ENCODE measurements at regions of chr17 and their contacts with region 1.

Region 1: GRCh38 chr17:49031965-49032928 is 35.1 kb downstream of the IGF2BP1 start:
- DNase-seq: peak; percentile 87 to 96
- ATAC-seq: peak; percentile 80 to 83
- H3K4me3 ChIP-seq: no peak overlapping the region
- H3K27ac ChIP-seq: peak overlapping the region; percentile 22 to 63; a peak in 5 of 6 replicates
- H3K4me1 ChIP-seq: peaks cover 15% of the 10 kb centered on the region
- CTCF ChIP-seq: peak; percentile 98
- EP300 ChIP-seq: no peak
- POLR2A ChIP-seq: no peak
- RAD21 ChIP-seq: peak; percentile 98 to 99

Region 2: DNA sequence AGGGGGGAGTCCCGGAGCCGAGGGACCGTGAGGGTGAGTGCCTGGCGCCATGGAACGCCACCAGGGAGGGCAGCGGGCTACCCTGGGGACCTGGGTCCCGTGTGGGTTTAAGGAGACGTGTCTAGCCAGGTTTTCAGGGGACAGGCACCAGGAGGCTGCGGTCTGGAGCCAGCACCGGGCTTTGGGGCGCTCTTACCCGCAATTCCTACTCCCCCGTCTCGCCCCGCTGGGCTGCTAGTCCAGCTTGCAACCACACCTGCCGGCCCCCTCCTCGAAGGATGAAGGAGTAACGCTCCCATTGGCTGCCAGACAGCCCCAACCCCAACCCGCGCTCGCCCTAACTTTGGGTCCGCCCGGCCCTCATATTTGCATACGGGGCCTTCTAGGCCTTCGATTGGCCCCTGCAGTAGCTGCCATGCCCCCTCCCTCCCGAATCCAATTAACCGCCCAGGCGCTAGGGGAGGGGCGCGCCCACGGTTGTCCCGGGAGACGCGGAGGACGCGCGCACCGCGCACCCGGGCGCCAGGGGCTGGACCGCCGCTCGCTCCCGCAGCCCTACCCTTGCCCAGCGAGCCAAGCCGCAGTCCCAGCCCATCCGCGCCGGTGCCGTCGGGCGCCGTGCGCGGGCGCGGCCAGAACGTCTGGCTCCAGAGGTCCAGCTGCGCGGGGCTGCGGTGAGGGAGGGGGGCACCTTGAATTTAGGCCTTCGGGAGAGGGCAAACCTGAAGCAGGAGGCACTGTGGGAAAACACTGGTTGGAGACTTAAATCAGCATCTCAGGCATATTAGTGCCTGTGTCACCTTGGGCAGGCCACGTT is 215.3 kb before region 1 on chr17 and contains the start of gene TTLL6:
- CTCF ChIA-PET with region 1: interaction called, 13 read pairs
- POLR2A ChIA-PET with region 1: no interaction called
- DNase-seq: peak; percentile 90 to 97
- ATAC-seq: peak; percentile 95 to 97
- H3K4me3 ChIP-seq: peak within 1 kb of the TSS; percentile 54
- H3K27ac ChIP-seq: peak within 1 kb of the TSS; percentile 56 to 76
- H3K4me1 ChIP-seq: peaks cover 23% of the 10 kb centered on the region; the same call in 2 of the 3 replicates
- CTCF ChIP-seq: no peak
- EP300 ChIP-seq: no peak
- POLR2A ChIP-seq: no peak; the same call in 1 of the 2 replicates
- RAD21 ChIP-seq: no peak
- polyA plus RNA-seq, gene TTLL6: 7.8 and 8.9 TPM in 2 replicates

Region 3: DNA sequence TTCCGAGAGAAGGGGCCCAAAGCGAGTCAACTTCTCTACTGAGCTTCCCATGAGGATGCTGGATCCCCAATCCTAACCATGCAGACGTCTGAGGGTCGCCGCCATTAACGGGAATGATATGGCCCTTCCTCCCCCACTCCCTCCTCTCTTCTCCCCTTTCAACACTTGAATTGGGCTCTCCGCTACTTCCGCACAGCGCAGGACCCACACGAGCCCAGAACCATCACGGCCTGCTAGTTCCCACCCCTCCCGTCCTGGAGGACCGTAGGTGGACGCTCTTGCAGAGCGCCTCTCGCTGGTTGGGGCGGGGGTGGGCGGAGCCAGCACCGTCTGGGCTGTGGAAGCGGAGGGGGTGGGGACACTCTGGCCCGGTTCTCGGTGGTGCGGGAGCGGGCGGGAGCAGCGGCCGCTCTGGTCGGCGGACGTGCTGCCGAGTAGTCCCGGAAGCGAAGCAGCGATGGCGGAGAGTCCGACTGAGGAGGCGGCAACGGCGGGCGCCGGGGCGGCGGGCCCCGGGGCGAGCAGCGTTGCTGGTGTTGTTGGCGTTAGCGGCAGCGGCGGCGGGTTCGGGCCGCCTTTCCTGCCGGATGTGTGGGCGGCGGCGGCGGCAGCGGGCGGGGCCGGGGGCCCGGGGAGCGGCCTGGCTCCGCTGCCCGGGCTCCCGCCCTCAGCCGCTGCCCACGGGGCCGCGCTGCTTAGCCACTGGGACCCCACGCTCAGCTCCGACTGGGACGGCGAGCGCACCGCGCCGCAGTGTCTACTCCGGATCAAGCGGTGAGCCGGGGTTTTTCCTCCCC is 124.0 kb before region 1 on chr17 and contains the start of gene UBE2Z:
- CTCF ChIA-PET with region 1: interaction called, 32 read pairs
- POLR2A ChIA-PET with region 1: interaction called, 6 read pairs
- DNase-seq: peak; percentile 99
- ATAC-seq: peak; percentile 92 to 93
- H3K4me3 ChIP-seq: peak within 1 kb of the TSS; percentile 89
- H3K27ac ChIP-seq: peak within 1 kb of the TSS; percentile 94 to 98
- H3K4me1 ChIP-seq: peaks cover 44% of the 10 kb centered on the region
- CTCF ChIP-seq: peak; percentile 31; the same call in 2 of the 3 replicates
- EP300 ChIP-seq: 0 out of 5 replicates have a peak, but pooled peaks of 1 of the 2 experiments have one; percentile 4
- POLR2A ChIP-seq: peak; percentile 97
- RAD21 ChIP-seq: no peak
- polyA plus RNA-seq, gene UBE2Z: 174 and 196 TPM in 2 replicates

Region 4: DNA sequence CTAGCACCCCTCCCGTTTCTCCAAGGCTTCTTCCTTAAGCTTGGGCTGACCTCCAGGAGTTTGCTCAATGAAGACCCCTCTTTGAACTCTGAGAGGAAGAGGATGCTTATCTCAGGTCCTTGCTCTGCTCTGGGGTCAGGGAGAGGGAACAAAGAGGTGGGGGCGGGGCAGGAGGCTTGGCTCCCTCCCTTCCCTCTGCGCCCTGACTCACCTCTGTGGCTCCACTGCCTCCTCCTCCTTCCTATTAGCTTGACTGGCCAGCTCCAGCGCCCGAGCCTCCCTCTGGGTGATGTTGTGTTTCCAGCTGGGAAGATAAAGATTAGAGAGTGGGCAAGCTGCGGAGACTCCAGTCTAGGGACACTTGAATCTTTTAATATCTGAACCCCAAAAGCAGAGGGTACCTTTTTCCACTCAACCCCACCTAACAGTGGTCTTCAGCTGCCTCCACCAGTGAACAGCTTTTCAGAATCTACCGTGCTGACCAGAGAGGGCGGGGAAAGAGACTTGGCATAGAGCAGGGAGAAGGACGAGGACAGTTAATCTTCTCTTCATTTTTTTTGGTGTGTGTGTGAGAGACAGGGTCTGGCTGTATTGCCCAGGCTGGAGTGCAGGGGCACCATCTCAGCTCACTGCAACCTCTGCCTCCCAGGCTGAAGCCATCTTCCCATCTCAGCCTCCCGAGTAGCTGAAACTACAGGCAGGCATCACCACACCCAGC is 70.6 kb before region 1 on chr17:
- CTCF ChIA-PET with region 1: interaction called, 383 read pairs
- POLR2A ChIA-PET with region 1: interaction called, 3 read pairs
- DNase-seq: peak; percentile 83 to 86
- ATAC-seq: peak; percentile 91 to 94
- H3K4me3 ChIP-seq: peak overlapping the region; percentile 30
- H3K27ac ChIP-seq: peak overlapping the region; percentile 94 to 97
- H3K4me1 ChIP-seq: peaks cover 53% of the 10 kb centered on the region
- CTCF ChIP-seq: no peak
- EP300 ChIP-seq: no peak
- POLR2A ChIP-seq: no peak; the same call in none of the 2 replicates
- RAD21 ChIP-seq: peak in 1 of 2 experiments; percentile 15; a peak in 2 of 5 replicates

Region 5: GRCh38 chr17:49053171-49053829 is 21.1 kb after region 1 on chr17:
- CTCF ChIA-PET with region 1: interaction called, 107 read pairs
- POLR2A ChIA-PET with region 1: no interaction called
- DNase-seq: no peak
- ATAC-seq: peak; percentile 21 to 50; a peak in 4 of 6 replicates
- H3K4me3 ChIP-seq: no peak overlapping the region
- H3K27ac ChIP-seq: peak overlapping the region in 1 of 2 experiments; percentile 25; a peak in 1 of 6 replicates
- H3K4me1 ChIP-seq: no peaks in the 10 kb centered on the region
- CTCF ChIP-seq: no peak
- EP300 ChIP-seq: no peak
- POLR2A ChIP-seq: no peak
- RAD21 ChIP-seq: no peak

Region 6: DNA sequence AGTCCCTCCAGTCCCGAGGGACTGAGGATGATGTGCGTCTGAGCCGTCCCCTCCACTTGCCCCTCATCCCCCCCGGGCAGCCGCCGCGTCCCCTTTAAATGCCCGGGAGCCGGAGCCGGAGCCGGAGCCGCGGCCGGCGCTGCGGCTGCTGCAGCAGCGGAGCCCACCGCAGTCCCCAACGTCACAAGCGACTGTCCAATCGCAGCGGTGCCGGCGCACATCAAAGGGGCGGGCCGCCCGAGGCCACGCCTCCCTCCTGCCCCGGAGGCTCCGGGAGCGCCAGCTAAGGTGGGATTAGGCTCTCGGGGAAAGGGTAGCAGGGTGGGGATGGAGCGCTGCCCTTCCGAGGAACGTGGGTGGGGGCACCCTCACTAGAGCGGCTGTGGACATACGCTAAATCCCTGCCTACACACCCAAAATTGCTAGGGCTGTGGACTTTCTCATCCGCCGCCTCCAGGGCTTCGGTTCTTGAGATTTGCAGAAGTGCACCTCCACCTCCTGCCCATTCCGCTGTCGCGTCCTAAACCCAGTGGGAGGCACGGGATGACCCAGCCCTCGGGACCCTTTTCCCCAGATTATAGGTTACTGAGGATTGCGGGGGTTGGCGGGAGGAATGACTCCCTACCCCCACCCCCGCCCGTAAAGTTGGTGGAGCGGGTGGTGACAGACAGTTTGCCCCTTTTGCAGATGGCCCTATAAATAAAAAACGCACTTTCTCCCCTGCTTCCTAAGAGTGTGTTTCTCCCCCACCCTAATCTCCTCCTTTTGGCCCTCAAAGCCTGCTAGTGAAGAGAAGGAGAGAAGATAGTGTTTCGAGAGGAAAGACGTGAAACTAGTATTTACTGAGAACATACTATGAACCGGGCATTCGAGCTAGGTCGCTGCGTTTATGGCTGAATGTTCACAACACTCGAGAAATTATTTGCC is 198.7 kb after region 1 on chr17 and contains the start of gene PHOSPHO1:
- CTCF ChIA-PET with region 1: interaction called, 58 read pairs
- POLR2A ChIA-PET with region 1: no interaction called
- DNase-seq: peak; percentile 81 to 97
- ATAC-seq: peak; percentile 84 to 93
- H3K4me3 ChIP-seq: peak within 1 kb of the TSS; percentile 62
- H3K27ac ChIP-seq: peak within 1 kb of the TSS; percentile 33 to 74; a peak in 5 of 6 replicates
- H3K4me1 ChIP-seq: peaks cover 16% of the 10 kb centered on the region
- CTCF ChIP-seq: no peak
- EP300 ChIP-seq: no peak
- POLR2A ChIP-seq: peak; percentile 26; the same call in 1 of the 2 replicates
- RAD21 ChIP-seq: no peak
- polyA plus RNA-seq, gene PHOSPHO1: 0.32 and 0.34 TPM in 2 replicates

Measured in A549 (cell line).